WTC11 (cell line): ENCODE measurements at regions of chr7 and their contacts with region 1.

Region 1: GRCh38 chr7:24812310-24812945 is 55.2 kb upstream of the GSDME start:
- DNase-seq: peak; percentile 63
- ATAC-seq: peak; percentile 91
- H3K4me3 Mint-ChIP-seq: no peak overlapping the region
- H3K27ac Mint-ChIP-seq: no peak overlapping the region
- H3K4me1 Mint-ChIP-seq: no peaks in the 10 kb centered on the region
- H3K27me3 Mint-ChIP-seq: no peaks in the 10 kb centered on the region
- CTCF ChIP-seq: peak; percentile 91

Region 2: GRCh38 chr7:24395512-24395911 is 416.9 kb before region 1 on chr7:
- CTCF ChIA-PET with region 1: no interaction called
- POLR2A ChIA-PET with region 1: no interaction called
- DNase-seq: no peak
- ATAC-seq: peak; percentile 72
- H3K4me3 Mint-ChIP-seq: peak overlapping the region; percentile 95
- H3K27ac Mint-ChIP-seq: peak overlapping the region; percentile 93
- H3K4me1 Mint-ChIP-seq: peaks cover 41% of the 10 kb centered on the region
- H3K27me3 Mint-ChIP-seq: no peaks in the 10 kb centered on the region; the same call in 1 of the 2 replicates
- CTCF ChIP-seq: no peak

Region 3: DNA sequence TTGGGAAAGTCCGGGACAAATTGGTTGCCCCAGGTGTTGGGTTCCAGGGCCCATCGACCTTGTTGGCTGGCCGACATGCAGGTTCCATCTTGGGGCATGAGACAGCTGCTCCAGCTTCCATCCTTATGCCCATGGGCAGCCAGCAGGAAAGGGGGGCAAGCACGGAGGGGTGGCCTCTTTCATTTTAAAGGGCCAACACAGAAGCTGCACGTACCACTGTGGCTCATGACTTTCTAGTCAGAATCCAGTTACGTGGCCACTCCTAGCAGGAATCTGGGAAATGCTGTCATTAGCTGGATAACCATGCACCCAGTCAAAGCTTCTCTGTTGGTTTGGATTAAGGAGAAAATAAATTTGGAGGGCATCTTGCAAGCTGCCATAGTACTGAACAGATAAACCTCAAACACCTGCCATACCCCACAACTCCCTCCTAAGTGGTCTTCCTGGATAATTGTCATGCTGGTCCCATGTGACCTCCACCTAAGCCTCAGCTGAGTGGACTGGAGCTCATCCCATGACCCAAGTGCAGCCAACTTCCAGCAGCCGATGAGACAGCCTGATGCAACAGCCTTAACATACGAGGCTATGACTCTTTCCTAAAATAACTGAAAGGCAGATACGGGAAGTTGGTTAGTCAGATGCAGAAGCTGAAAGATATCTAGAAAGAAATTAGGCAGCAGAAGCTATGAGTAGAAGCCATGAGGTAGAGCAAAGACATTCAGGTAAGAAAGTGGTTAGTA is 33.7 kb before region 1 on chr7:
- CTCF ChIA-PET with region 1: interaction called, 12 read pairs
- POLR2A ChIA-PET with region 1: no interaction called
- DNase-seq: no peak
- ATAC-seq: no peak
- H3K4me3 Mint-ChIP-seq: no peak overlapping the region
- H3K27ac Mint-ChIP-seq: no peak overlapping the region
- H3K4me1 Mint-ChIP-seq: peaks cover 5% of the 10 kb centered on the region
- H3K27me3 Mint-ChIP-seq: peaks cover 3% of the 10 kb centered on the region; the same call in 1 of the 2 replicates
- CTCF ChIP-seq: no peak

Region 4: GRCh38 chr7:24842449-24843241 is 30.2 kb after region 1 on chr7:
- CTCF ChIA-PET with region 1: interaction called, 11 read pairs
- POLR2A ChIA-PET with region 1: no interaction called
- DNase-seq: no peak
- ATAC-seq: no peak; the same call in 1 of the 2 replicates
- H3K4me3 Mint-ChIP-seq: no peak overlapping the region
- H3K27ac Mint-ChIP-seq: peak overlapping the region; percentile 4; the same call in 1 of the 2 replicates
- H3K4me1 Mint-ChIP-seq: peaks cover 18% of the 10 kb centered on the region
- H3K27me3 Mint-ChIP-seq: no peaks in the 10 kb centered on the region
- CTCF ChIP-seq: no peak

Region 5: GRCh38 chr7:24882989-24883621 is 70.7 kb after region 1 on chr7:
- CTCF ChIA-PET with region 1: interaction called, 35 read pairs
- POLR2A ChIA-PET with region 1: no interaction called
- DNase-seq: no peak
- ATAC-seq: no peak
- H3K4me3 Mint-ChIP-seq: no peak overlapping the region
- H3K27ac Mint-ChIP-seq: no peak overlapping the region
- H3K4me1 Mint-ChIP-seq: peaks cover 59% of the 10 kb centered on the region
- H3K27me3 Mint-ChIP-seq: no peaks in the 10 kb centered on the region
- CTCF ChIP-seq: no peak

Region 6: GRCh38 chr7:24979863-24980533 is 167.6 kb after region 1 on chr7 and contains the start of gene OSBPL3:
- CTCF ChIA-PET with region 1: interaction called, 21 read pairs
- POLR2A ChIA-PET with region 1: no interaction called
- DNase-seq: peak; percentile 93
- ATAC-seq: peak; percentile 82
- H3K4me3 Mint-ChIP-seq: peak within 1 kb of the TSS; percentile 86
- H3K27ac Mint-ChIP-seq: peak within 1 kb of the TSS; percentile 94
- H3K4me1 Mint-ChIP-seq: peaks cover 62% of the 10 kb centered on the region
- H3K27me3 Mint-ChIP-seq: peaks cover 47% of the 10 kb centered on the region
- CTCF ChIP-seq: no peak
- total RNA-seq, gene OSBPL3: 16.0 to 20.2 TPM (median 17.1 TPM) in 3 replicates

Region 7: DNA sequence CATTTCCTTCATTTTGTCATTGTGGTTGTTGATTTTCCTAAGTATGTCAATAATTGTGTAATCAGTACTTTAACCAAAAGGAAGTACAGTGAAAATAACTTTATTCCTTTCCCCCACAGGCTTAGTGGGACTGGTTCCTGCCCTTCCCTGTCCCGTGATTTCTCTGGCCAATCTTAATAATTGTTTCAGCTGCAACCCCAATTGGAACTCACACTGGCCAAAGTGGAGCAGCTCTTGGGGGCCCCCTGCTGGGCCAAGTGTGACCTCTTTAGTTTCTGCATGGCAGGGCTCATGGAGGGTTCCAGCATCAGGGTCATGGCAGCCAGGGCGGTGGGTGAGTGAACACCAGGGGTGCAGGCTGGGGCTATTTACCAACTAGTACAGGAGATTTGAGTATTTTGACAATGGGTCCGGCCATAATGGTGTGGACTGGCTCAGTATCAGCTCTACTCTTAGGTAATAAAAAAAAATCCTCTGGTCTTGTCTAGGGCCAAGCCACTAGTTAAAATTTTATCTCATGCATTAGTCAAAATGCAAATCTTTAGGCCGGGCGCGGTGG is 280.9 kb after region 1 on chr7:
- CTCF ChIA-PET with region 1: interaction called, 138 read pairs
- POLR2A ChIA-PET with region 1: no interaction called
- DNase-seq: peak; percentile 88
- ATAC-seq: peak; percentile 84
- H3K4me3 Mint-ChIP-seq: no peak overlapping the region
- H3K27ac Mint-ChIP-seq: no peak overlapping the region; the same call in 1 of the 2 replicates
- H3K4me1 Mint-ChIP-seq: peaks cover 8% of the 10 kb centered on the region
- H3K27me3 Mint-ChIP-seq: no peaks in the 10 kb centered on the region; the same call in 1 of the 2 replicates
- CTCF ChIP-seq: peak; percentile 49; the same call in 1 of the 2 replicates